ENCODE measurements at regions of chr14 and their contacts with region 1.

Region 1: GRCh38 chr14:61585598-61586543 is 109.4 kb upstream of the HIF1A start:
- DNase-seq: peak; percentile 90 to 92
- ATAC-seq: peak; percentile 91
- H3K4me3 ChIP-seq: no peak overlapping the region
- H3K27ac ChIP-seq: peak overlapping the region; percentile 80 to 100
- H3K4me1 ChIP-seq: peaks cover 9 to 17% of the 10 kb centered on the region in 2 donors
- H3K27me3 ChIP-seq: no peaks in the 10 kb centered on the region

Region 2: DNA sequence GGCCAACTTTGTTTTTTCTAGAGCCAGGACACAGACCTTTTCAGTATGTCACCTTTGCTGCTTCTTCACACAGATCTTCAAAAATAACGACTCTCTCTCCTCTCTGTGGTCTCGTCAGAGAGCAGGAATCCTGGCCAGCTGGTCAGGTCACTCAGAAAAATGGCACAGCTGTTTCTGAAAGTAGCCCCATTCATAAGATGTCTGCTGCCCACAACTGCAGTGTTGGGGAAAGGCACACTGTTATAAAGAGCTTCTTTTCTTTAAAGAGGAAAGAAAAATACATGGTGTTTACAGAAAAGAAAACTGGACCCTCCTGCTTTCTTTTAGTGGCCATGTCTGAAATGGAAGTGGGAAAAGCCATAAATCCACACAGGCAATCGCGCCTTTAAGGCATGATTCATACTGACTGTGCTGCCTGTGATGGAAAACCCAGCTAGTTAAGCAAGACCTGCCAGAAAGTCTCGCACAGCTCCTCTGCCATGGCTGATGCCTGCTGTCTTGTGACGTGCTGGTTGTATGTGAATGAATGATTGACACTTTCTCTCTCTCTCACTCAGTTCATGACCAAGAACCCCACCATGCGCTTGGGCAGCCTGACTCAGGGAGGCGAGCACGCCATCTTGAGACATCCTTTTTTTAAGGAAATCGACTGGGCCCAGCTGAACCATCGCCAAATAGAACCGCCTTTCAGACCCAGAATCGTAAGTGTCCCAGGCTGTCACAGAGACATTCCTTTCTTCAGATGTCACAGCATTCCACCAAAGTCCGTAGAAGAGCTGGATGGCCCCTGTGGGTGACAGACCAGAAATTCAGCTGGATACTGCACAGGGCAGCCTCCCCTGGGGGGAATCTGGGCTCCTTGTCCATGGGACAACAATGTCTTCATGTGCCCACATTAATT is 38.4 kb before region 1 on chr14:
- intact Hi-C with region 1: loop called (anchors 5 kb)
- DNase-seq: peak in 1 of 2 donors; percentile 77
- ATAC-seq: peak; percentile 53
- H3K4me3 ChIP-seq: no peak overlapping the region
- H3K27ac ChIP-seq: peak overlapping the region in 1 of 2 donors; percentile 42
- H3K4me1 ChIP-seq: peaks cover 7 to 9% of the 10 kb centered on the region in 2 donors
- H3K27me3 ChIP-seq: no peaks in the 10 kb centered on the region

Region 3: DNA sequence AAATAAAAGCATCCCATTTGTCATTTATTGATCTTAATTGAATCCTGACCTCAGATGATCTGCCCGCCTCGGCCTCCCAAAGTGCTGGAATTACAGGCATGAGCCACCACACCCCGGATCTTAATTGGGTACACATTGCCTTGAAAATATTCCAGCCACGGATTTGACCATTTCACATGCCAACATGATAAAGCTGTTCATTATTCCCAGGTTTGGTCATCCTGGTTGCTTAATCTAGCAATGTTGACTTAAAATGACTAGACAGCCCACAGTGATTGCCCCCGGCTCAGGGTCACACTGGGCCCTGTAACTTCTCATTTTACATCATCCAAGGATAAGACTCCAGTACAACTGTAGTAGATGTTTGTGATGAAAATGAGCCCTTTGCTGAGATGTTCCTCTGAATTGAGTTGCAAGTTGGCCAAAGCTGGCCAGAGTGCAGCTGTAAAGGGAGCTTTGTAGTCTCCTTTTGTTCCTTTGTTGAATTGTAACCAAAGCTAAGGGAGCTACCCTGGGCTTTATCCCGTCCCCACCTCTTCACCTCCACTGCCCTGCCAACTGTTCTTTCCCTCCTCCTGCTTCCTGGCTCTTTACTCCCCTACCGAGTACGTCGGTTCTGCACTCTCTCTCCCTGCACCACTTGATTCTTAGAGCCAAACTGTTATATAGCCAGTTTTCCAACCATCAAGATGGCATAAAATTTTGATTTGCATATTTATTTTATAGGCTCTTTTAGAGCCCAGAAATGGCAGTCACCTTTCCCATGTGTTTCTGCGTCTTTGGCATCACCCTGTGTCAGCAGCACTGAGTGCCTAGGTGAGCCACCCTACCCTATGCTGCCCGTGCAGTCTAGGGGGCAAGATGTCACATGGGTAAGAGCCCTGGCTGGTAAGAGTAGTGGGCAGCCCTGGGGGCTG is 31.9 kb before region 1 on chr14:
- intact Hi-C with region 1: loop called (anchors 5 kb)
- DNase-seq: peak in 1 of 2 donors; percentile 69
- ATAC-seq: peak; percentile 23
- H3K4me3 ChIP-seq: no peak overlapping the region
- H3K27ac ChIP-seq: no peak overlapping the region
- H3K4me1 ChIP-seq: no peaks in the 10 kb centered on the region
- H3K27me3 ChIP-seq: no peaks in the 10 kb centered on the region

Region 4: GRCh38 chr14:61561657-61562276 is 24.1 kb before region 1 on chr14:
- intact Hi-C with region 1: loop called in 1 of 2 experiments (anchors 2 kb)
- DNase-seq: peak; percentile 89 to 91
- ATAC-seq: peak; percentile 77
- H3K4me3 ChIP-seq: no peak overlapping the region
- H3K27ac ChIP-seq: peak overlapping the region in 1 of 2 donors; percentile 61
- H3K4me1 ChIP-seq: peaks cover 0 to 2% of the 10 kb centered on the region in 2 donors
- H3K27me3 ChIP-seq: no peaks in the 10 kb centered on the region

Region 5: GRCh38 chr14:61694830-61695694 is 109.2 kb after region 1 on chr14 and contains the start of gene HIF1A:
- intact Hi-C with region 1: loop called (anchors 2 to 5 kb)
- DNase-seq: peak; percentile 98 to 99
- ATAC-seq: peak; percentile 98
- H3K4me3 ChIP-seq: peak within 1 kb of the TSS; percentile 82 to 84
- H3K27ac ChIP-seq: peak within 1 kb of the TSS in 1 of 2 donors; percentile 95
- H3K4me1 ChIP-seq: peaks cover 0 to 8% of the 10 kb centered on the region in 2 donors
- H3K27me3 ChIP-seq: peaks cover 0 to 2% of the 10 kb centered on the region in 2 donors
- total RNA-seq, gene HIF1A: 164 to 173 TPM

Measured in aorta (tissue), 5 donors.